ENCODE measurements at regions of chr1 and their contacts with region 1.

Region 1: GRCh38 chr1:43991476-43992231 is at the start of gene CCDC24:
- DNase-seq: peak; percentile 71
- H3K4me3 Mint-ChIP-seq: peak within 1 kb of the TSS; percentile 92
- H3K27ac Mint-ChIP-seq: peak within 1 kb of the TSS; percentile 22
- H3K4me1 Mint-ChIP-seq: peaks cover 8% of the 10 kb centered on the region
- H3K27me3 Mint-ChIP-seq: peaks cover 3% of the 10 kb centered on the region
- total RNA-seq, gene CCDC24: 2.1 and 2.3 TPM in 2 replicates

Region 2: GRCh38 chr1:43611950-43612349 is 379.7 kb before region 1 on chr1:
- intact Hi-C with region 1: no loop called
- DNase-seq: no peak
- H3K4me3 Mint-ChIP-seq: no peak overlapping the region
- H3K27ac Mint-ChIP-seq: no peak overlapping the region
- H3K4me1 Mint-ChIP-seq: no peaks in the 10 kb centered on the region
- H3K27me3 Mint-ChIP-seq: no peaks in the 10 kb centered on the region

Region 3: GRCh38 chr1:43936431-43937151 is 55.1 kb before region 1 on chr1:
- intact Hi-C with region 1: no loop called
- DNase-seq: peak; percentile 17
- H3K4me3 Mint-ChIP-seq: peak overlapping the region; percentile 51
- H3K27ac Mint-ChIP-seq: no peak overlapping the region
- H3K4me1 Mint-ChIP-seq: peaks cover 10% of the 10 kb centered on the region
- H3K27me3 Mint-ChIP-seq: peaks cover 10% of the 10 kb centered on the region

Region 4: DNA sequence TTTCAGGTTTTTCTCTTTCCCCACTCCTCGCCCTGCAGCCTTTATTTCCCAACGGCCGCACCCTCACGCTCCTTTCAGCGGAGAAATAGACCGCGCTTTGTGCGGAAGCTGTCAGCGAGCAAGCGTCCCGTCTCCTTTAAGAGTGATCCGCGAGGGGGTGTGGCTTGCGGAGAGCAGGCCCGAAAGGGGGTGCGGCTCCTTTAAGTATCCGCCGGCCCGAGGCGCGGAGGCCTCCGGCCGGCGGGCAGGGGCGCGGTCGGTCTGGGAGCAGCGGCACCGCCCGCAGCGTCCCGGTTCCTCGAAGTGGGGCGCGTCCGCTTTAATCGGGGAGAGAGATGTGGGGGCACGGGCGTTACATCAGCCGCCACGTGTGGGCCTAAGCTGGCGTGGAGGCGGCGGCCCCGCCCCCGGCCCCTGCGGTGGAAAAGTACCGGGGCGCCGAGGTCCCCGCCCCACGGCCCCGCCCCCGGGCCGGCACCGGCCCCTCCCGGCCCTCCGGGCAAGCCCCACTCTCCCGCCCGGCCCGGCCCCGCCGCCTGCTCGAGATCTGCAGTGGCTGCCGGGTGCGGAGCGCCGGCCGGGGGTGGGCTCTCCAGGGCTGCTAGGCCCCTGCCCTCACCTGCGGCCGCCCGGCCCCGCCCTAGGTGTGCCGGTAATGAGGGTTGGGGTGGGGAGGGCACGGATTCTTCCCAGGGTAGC is 38.4 kb after region 1 on chr1:
- intact Hi-C with region 1: loop called (anchors 5 kb)
- DNase-seq: peak; percentile 86
- H3K4me3 Mint-ChIP-seq: peak overlapping the region; percentile 90
- H3K27ac Mint-ChIP-seq: peak overlapping the region; percentile 90
- H3K4me1 Mint-ChIP-seq: peaks cover 29% of the 10 kb centered on the region
- H3K27me3 Mint-ChIP-seq: no peaks in the 10 kb centered on the region

Region 5: DNA sequence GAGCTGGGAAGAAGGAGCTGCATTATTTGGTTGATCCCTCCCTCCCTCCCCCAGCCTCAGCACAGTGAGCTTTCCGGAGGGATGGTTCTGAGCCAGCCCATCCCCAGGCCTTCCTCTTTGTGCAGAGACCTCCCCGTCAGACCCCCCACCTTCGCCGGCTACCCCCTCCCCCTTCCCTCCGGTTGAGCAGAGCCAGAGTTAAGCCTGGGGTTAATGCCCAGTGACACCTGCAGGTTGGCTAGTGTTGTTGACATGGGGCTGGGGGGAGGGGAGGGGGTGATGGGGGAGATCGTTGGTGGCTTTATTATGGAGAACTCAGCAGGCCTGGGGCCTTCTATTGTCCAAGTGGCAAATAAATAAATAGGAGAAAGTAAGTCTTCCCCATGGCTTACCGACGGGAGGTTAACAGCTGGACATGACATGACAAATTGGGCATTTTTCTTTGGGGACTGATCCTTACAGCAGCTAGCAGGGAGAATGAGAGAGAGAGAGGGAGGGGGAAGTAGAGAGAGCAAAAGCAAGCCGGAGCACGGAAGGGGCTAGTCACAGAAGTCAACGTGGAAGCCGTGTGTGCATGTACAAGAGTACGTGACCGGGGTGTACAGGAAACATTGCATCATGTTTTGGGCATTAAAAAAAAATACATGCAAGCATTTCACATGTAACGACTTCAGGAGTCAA is 551.5 kb after region 1 on chr1:
- intact Hi-C with region 1: no loop called
- DNase-seq: no peak
- H3K4me3 Mint-ChIP-seq: no peak overlapping the region
- H3K27ac Mint-ChIP-seq: no peak overlapping the region
- H3K4me1 Mint-ChIP-seq: no peaks in the 10 kb centered on the region
- H3K27me3 Mint-ChIP-seq: peaks cover 17% of the 10 kb centered on the region